T-cell (primary cell): ENCODE measurements at regions of chr17 and their contacts with region 1.

Region 1: DNA sequence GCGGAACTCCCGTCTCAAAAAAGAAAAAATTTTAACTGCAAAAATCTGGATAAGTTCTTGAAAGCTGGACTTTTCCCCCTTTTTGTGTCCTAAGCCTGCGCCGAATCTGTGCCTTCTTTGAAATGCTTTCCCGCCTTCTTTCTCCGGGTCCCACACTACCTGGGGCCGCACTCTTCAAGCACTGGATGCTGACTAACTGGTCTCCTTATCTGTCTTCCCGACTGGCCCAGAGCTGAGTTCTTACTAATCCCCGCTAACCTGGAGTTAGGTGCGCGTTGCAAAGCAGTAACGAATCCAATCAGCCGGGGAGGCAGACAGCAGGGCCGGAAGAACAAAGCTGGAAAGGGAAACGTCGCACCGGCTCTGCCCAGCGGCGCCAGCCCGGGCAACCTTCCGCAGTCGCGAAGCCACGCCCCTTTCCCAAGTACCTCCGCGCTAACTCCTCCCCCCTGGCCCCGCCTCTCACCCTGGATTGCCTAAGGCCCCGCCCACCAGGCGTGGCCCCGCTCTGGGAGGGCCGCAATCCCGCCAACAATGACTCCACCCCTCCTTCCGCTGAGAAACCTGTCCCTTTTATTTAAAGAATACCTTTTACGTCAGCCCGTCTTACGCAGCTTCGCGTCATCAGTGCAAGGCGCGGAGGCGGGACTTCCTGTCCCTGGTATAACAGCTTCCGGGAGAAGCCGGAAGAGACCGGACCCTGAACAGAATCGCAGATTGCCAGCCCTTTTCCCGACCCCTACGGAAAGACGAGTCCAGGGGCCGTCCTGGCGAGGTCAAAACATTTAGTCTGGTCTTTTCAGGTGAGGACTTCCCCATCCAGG is at the start of gene TMUB2:
- DNase-seq: peak; percentile 98 to 100 (median 99)
- ATAC-seq: peak; percentile 89 to 97 (median 92)
- H3K4me3 ChIP-seq: peak within 1 kb of the TSS; percentile 98
- H3K4me3 Mint-ChIP-seq: peak within 1 kb of the TSS; percentile 99 to 100 (median 99)
- H3K27ac ChIP-seq: peak within 1 kb of the TSS; percentile 98
- H3K27ac Mint-ChIP-seq: peak within 1 kb of the TSS; percentile 100
- H3K4me1 ChIP-seq: peaks cover 11 to 39% of the 10 kb centered on the region in 2 experiments
- H3K4me1 Mint-ChIP-seq: peaks cover 36 to 61% (median 54%) of the 10 kb centered on the region in 3 donors
- H3K27me3 ChIP-seq: no peaks in the 10 kb centered on the region
- H3K27me3 Mint-ChIP-seq: no peaks in the 10 kb centered on the region
- total RNA-seq, gene TMUB2: 42.0 to 46.6 (median 43.0) TPM

Region 2: GRCh38 chr17:43134774-43135453 is 1051.6 kb before region 1 on chr17:
- CTCF ChIA-PET with region 1: interaction called in 1 of 2 experiments, 10 read pairs
- POLR2A ChIA-PET with region 1: no interaction called
- DNase-seq: no peak
- ATAC-seq: no peak
- H3K4me3 ChIP-seq: no peak overlapping the region
- H3K4me3 Mint-ChIP-seq: no peak overlapping the region
- H3K27ac ChIP-seq: no peak overlapping the region
- H3K27ac Mint-ChIP-seq: no peak overlapping the region
- H3K4me1 ChIP-seq: no peaks in the 10 kb centered on the region
- H3K4me1 Mint-ChIP-seq: peaks cover 6 to 12% (median 11%) of the 10 kb centered on the region in 3 donors
- H3K27me3 ChIP-seq: no peaks in the 10 kb centered on the region
- H3K27me3 Mint-ChIP-seq: no peaks in the 10 kb centered on the region

Region 3: GRCh38 chr17:44123356-44124117 is 63.0 kb before region 1 on chr17 and contains the start of gene HDAC5:
- CTCF ChIA-PET with region 1: interaction called in 1 of 2 experiments, 12 read pairs
- POLR2A ChIA-PET with region 1: no interaction called
- DNase-seq: peak; percentile 92 to 98 (median 96)
- ATAC-seq: peak; percentile 93 to 98 (median 94)
- H3K4me3 ChIP-seq: peak within 1 kb of the TSS; percentile 91 to 95
- H3K4me3 Mint-ChIP-seq: peak within 1 kb of the TSS; percentile 83 to 94 (median 87)
- H3K27ac ChIP-seq: peak within 1 kb of the TSS; percentile 82
- H3K27ac Mint-ChIP-seq: peak within 1 kb of the TSS; percentile 91 to 96
- H3K4me1 ChIP-seq: peaks cover 16 to 44% of the 10 kb centered on the region in 2 experiments
- H3K4me1 Mint-ChIP-seq: peaks cover 43 to 47% (median 46%) of the 10 kb centered on the region in 3 donors
- H3K27me3 ChIP-seq: no peaks in the 10 kb centered on the region
- H3K27me3 Mint-ChIP-seq: no peaks in the 10 kb centered on the region
- total RNA-seq, gene HDAC5: 68.6 to 81.4 (median 72.8) TPM

Region 4: DNA sequence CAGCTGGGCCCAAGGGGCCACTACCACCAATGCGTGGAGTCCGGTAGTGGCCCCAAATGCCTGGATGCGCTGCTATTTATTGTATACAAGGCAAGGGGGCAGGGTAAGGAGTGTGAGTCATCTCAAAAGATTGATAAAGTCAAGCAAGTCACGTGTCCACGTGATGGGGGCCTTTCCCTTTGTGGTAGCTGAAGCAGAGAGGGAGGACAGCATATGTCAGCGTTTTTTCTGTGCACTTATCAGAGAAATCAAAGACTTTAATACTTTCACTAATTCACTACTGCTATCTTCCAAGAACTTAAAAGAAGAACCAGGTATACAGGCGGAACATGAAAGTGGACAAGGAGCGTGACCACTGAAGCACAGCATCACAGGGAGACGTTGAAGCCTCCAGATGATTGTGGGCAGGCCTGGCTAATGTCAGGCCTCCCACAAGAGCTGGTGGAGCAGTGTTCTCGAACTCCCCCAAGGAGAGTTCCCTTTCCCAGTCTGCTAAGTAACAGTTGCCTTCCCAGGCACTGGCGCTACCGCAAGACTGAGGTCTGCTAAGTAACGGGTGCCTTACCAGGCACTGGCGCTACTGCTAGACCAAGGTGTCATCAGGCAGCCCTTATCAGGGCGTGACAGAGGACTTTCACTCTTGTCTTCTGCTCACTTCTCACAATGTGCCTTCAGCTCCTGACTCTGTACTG is 26.9 kb before region 1 on chr17:
- CTCF ChIA-PET with region 1: no interaction called
- POLR2A ChIA-PET with region 1: no interaction called
- DNase-seq: peak in 10 of 35 experiments; percentile 7 to 39 (median 18)
- ATAC-seq: peak; percentile 42 to 64 (median 56)
- H3K4me3 ChIP-seq: no peak overlapping the region
- H3K4me3 Mint-ChIP-seq: no peak overlapping the region
- H3K27ac ChIP-seq: no peak overlapping the region
- H3K27ac Mint-ChIP-seq: peak overlapping the region in 1 of 2 donors; percentile 70
- H3K4me1 ChIP-seq: peaks cover 0 to 2% of the 10 kb centered on the region in 2 experiments
- H3K4me1 Mint-ChIP-seq: peaks cover 0 to 6% (median 5%) of the 10 kb centered on the region in 3 donors
- H3K27me3 ChIP-seq: peaks cover 0 to under 1% of the 10 kb centered on the region in 2 experiments
- H3K27me3 Mint-ChIP-seq: no peaks in the 10 kb centered on the region

Region 5: GRCh38 chr17:44210342-44211192 is 24.0 kb after region 1 on chr17:
- CTCF ChIA-PET with region 1: interaction called, 7 to 12 read pairs
- POLR2A ChIA-PET with region 1: interaction called in 1 of 2 experiments, 3 read pairs
- DNase-seq: peak; percentile 81 to 95 (median 89)
- ATAC-seq: peak; percentile 95 to 96 (median 96)
- H3K4me3 ChIP-seq: no peak overlapping the region
- H3K4me3 Mint-ChIP-seq: peak overlapping the region; percentile 34 to 62 (median 50)
- H3K27ac ChIP-seq: peak overlapping the region; percentile 62
- H3K27ac Mint-ChIP-seq: peak overlapping the region; percentile 70 to 83
- H3K4me1 ChIP-seq: peaks cover 17 to 73% of the 10 kb centered on the region in 2 experiments
- H3K4me1 Mint-ChIP-seq: peaks cover 54 to 68% (median 63%) of the 10 kb centered on the region in 3 donors
- H3K27me3 ChIP-seq: no peaks in the 10 kb centered on the region
- H3K27me3 Mint-ChIP-seq: no peaks in the 10 kb centered on the region